ENCODE measurements at regions of chr10 and their contacts with region 1.

Region 1: GRCh38 chr10:27155066-27155754 is at the start of gene MASTL:
- DNase-seq: peak; percentile 69
- ATAC-seq: peak; percentile 86
- H3K4me3 ChIP-seq: peak within 1 kb of the TSS; percentile 87
- H3K27ac ChIP-seq: peak within 1 kb of the TSS; percentile 100
- H3K4me1 ChIP-seq: no peaks in the 10 kb centered on the region; the same call in 1 of the 2 replicates
- H3K27me3 ChIP-seq: no peaks in the 10 kb centered on the region
- CTCF ChIP-seq: no peak
- EP300 ChIP-seq: no peak
- POLR2A ChIP-seq: peak; percentile 96
- RAD21 ChIP-seq: no peak
- polyA plus RNA-seq, gene MASTL: 7.1 to 9.7 TPM

Region 2: GRCh38 chr10:26890956-26891355 is 264.3 kb before region 1 on chr10:
- CTCF ChIA-PET with region 1: no interaction called
- POLR2A ChIA-PET with region 1: no interaction called
- RAD21 ChIA-PET with region 1: no interaction called
- SMC1A ChIA-PET with region 1: no interaction called
- in situ Hi-C with region 1: no loop called
- intact Hi-C with region 1: loop called (anchors 5 kb)
- DNase-seq: no peak
- ATAC-seq: peak; percentile 83
- H3K4me3 ChIP-seq: no peak overlapping the region
- H3K27ac ChIP-seq: no peak overlapping the region
- H3K4me1 ChIP-seq: no peaks in the 10 kb centered on the region
- H3K27me3 ChIP-seq: no peaks in the 10 kb centered on the region; a peak in 1 of 4 replicates
- CTCF ChIP-seq: peak; percentile 55 to 71 (median 68)
- EP300 ChIP-seq: no peak
- POLR2A ChIP-seq: no peak
- RAD21 ChIP-seq: peak; percentile 87

Region 3: GRCh38 chr10:27019827-27020226 is 135.4 kb before region 1 on chr10:
- CTCF ChIA-PET with region 1: no interaction called
- POLR2A ChIA-PET with region 1: no interaction called
- RAD21 ChIA-PET with region 1: no interaction called
- SMC1A ChIA-PET with region 1: no interaction called
- in situ Hi-C with region 1: no loop called
- intact Hi-C with region 1: no loop called
- DNase-seq: no peak
- ATAC-seq: no peak
- H3K4me3 ChIP-seq: no peak overlapping the region
- H3K27ac ChIP-seq: no peak overlapping the region
- H3K4me1 ChIP-seq: no peaks in the 10 kb centered on the region
- H3K27me3 ChIP-seq: no peaks in the 10 kb centered on the region
- CTCF ChIP-seq: no peak
- EP300 ChIP-seq: no peak
- POLR2A ChIP-seq: no peak
- RAD21 ChIP-seq: no peak

Region 4: GRCh38 chr10:27099916-27100812 is 55.0 kb before region 1 on chr10 and contains the start of gene ANKRD26:
- CTCF ChIA-PET with region 1: no interaction called
- POLR2A ChIA-PET with region 1: interaction called, 7 read pairs
- RAD21 ChIA-PET with region 1: interaction called, 6 read pairs
- SMC1A ChIA-PET with region 1: interaction called, 4 read pairs
- in situ Hi-C with region 1: no loop called
- intact Hi-C with region 1: loop called (anchors 2 kb)
- DNase-seq: peak; percentile 94
- ATAC-seq: peak; percentile 89
- H3K4me3 ChIP-seq: peak within 1 kb of the TSS; percentile 73
- H3K27ac ChIP-seq: peak within 1 kb of the TSS; percentile 93
- H3K4me1 ChIP-seq: peaks cover 9% of the 10 kb centered on the region
- H3K27me3 ChIP-seq: no peaks in the 10 kb centered on the region
- CTCF ChIP-seq: 0 out of 6 replicates have a peak, but pooled peaks of 1 of the 3 experiments have one; percentile 1
- EP300 ChIP-seq: no peak
- POLR2A ChIP-seq: peak; percentile 85
- RAD21 ChIP-seq: no peak
- polyA plus RNA-seq, gene ANKRD26: 2.3 to 3.4 TPM

Region 5: GRCh38 chr10:27241652-27242472 is 86.7 kb after region 1 on chr10:
- CTCF ChIA-PET with region 1: interaction called, 13 read pairs
- POLR2A ChIA-PET with region 1: interaction called, 25 read pairs
- RAD21 ChIA-PET with region 1: interaction called, 6 read pairs
- SMC1A ChIA-PET with region 1: interaction called, 4 read pairs
- in situ Hi-C with region 1: no loop called
- intact Hi-C with region 1: loop called (anchors 1 kb)
- DNase-seq: peak; percentile 80
- ATAC-seq: peak; percentile 74
- H3K4me3 ChIP-seq: peak overlapping the region; percentile 93
- H3K27ac ChIP-seq: peak overlapping the region; percentile 95
- H3K4me1 ChIP-seq: peaks cover 4% of the 10 kb centered on the region; the same call in 1 of the 2 replicates
- H3K27me3 ChIP-seq: no peaks in the 10 kb centered on the region
- CTCF ChIP-seq: peak; percentile 17 to 40 (median 23); a peak in 5 of 6 replicates
- EP300 ChIP-seq: no peak
- POLR2A ChIP-seq: peak; percentile 90
- RAD21 ChIP-seq: no peak

Region 6: DNA sequence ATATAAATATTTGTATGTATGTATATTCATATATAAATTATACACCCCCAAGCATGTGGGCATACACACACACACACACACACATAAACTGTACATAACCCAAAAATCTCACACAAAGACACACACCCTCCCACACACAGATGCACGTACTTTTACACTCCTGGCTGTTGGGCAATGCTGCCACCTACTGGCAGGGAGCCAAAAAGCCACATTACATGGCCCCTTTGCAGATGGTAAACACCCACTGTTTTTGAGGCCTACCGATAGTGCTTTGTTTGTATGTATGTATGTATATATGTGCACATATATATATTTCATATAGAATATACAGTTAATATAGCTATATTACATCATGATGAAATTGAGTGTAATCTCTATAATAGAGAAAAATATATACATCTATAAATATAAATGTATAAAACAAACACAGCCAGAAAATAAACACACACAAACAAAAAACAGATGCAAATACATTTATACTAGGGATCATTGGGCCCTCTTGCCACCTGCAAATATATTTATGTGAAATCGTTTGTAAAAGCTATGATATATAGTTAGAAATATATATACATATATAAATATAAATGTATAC is 205.5 kb after region 1 on chr10:
- CTCF ChIA-PET with region 1: interaction called, 4 read pairs
- POLR2A ChIA-PET with region 1: no interaction called
- RAD21 ChIA-PET with region 1: interaction called, 3 read pairs
- SMC1A ChIA-PET with region 1: no interaction called
- in situ Hi-C with region 1: no loop called
- intact Hi-C with region 1: loop called (anchors 2 kb)
- DNase-seq: peak; percentile 62
- ATAC-seq: peak; percentile 98
- H3K4me3 ChIP-seq: no peak overlapping the region
- H3K27ac ChIP-seq: no peak overlapping the region
- H3K4me1 ChIP-seq: 0 out of 2 replicates have a peak, but pooled peaks cover 5% of the 10 kb centered on the region
- H3K27me3 ChIP-seq: no peaks in the 10 kb centered on the region
- CTCF ChIP-seq: peak; percentile 90 to 98 (median 95); a peak in 5 of 6 replicates
- EP300 ChIP-seq: no peak
- POLR2A ChIP-seq: no peak
- RAD21 ChIP-seq: peak; percentile 100

Region 7: DNA sequence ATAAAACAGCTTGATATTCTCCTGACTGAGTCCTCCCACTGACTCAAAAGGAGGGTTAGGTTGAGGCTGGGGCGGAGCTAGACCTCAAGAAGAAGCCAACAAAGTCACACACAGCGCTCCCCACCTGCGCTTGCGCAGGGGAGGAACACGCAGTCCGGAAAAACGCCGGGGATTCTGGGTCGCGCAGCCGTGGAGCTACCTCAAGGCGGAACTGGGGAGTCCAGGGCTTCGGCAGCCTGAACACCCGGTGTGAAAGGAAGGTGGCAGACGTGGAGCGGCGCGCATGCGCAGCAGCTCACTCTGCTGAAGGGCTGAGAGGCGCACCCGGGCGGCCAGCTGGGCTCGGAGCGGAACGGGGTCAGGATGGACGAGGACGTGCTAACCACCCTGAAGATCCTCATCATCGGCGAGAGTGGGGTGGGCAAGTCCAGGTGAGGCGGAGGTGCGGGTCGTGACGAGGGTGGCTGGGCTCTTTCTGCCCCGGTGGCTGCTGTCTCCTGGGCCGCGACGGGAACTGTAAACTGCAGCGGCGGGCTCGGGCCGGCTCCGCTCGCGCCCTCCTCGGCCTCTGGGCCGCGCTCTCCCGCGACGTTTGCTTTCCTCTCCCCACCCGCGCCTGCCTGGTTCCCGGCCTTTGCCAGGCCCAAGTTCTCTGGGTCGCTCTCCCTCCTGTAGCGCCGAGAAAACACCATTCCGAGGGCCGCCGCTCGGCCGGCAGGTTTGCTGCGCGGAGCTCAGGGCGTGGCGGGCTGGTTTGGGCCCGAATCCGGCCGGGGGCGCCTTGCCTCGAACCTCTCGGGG is 349.0 kb after region 1 on chr10 and contains the start of gene RAB18:
- CTCF ChIA-PET with region 1: no interaction called
- POLR2A ChIA-PET with region 1: interaction called, 3 read pairs
- RAD21 ChIA-PET with region 1: no interaction called
- SMC1A ChIA-PET with region 1: no interaction called
- in situ Hi-C with region 1: no loop called
- intact Hi-C with region 1: loop called (anchors 5 kb)
- DNase-seq: peak; percentile 96
- ATAC-seq: peak; percentile 97
- H3K4me3 ChIP-seq: peak within 1 kb of the TSS; percentile 83
- H3K27ac ChIP-seq: peak within 1 kb of the TSS; percentile 74
- H3K4me1 ChIP-seq: peaks cover 3% of the 10 kb centered on the region; the same call in 1 of the 2 replicates
- H3K27me3 ChIP-seq: no peaks in the 10 kb centered on the region
- CTCF ChIP-seq: peak in 1 of 3 experiments; percentile 8; a peak in 1 of 6 replicates
- EP300 ChIP-seq: no peak
- POLR2A ChIP-seq: peak; percentile 99
- RAD21 ChIP-seq: no peak
- polyA plus RNA-seq, gene RAB18: 45.5 to 67.0 TPM

Region 8: GRCh38 chr10:27584302-27584701 is 429.1 kb after region 1 on chr10:
- CTCF ChIA-PET with region 1: no interaction called
- POLR2A ChIA-PET with region 1: no interaction called
- RAD21 ChIA-PET with region 1: no interaction called
- SMC1A ChIA-PET with region 1: no interaction called
- in situ Hi-C with region 1: no loop called
- intact Hi-C with region 1: no loop called
- DNase-seq: no peak
- ATAC-seq: no peak
- H3K4me3 ChIP-seq: no peak overlapping the region
- H3K27ac ChIP-seq: no peak overlapping the region
- H3K4me1 ChIP-seq: no peaks in the 10 kb centered on the region
- H3K27me3 ChIP-seq: no peaks in the 10 kb centered on the region
- CTCF ChIP-seq: no peak
- EP300 ChIP-seq: no peak
- POLR2A ChIP-seq: no peak
- RAD21 ChIP-seq: no peak

Region 9: DNA sequence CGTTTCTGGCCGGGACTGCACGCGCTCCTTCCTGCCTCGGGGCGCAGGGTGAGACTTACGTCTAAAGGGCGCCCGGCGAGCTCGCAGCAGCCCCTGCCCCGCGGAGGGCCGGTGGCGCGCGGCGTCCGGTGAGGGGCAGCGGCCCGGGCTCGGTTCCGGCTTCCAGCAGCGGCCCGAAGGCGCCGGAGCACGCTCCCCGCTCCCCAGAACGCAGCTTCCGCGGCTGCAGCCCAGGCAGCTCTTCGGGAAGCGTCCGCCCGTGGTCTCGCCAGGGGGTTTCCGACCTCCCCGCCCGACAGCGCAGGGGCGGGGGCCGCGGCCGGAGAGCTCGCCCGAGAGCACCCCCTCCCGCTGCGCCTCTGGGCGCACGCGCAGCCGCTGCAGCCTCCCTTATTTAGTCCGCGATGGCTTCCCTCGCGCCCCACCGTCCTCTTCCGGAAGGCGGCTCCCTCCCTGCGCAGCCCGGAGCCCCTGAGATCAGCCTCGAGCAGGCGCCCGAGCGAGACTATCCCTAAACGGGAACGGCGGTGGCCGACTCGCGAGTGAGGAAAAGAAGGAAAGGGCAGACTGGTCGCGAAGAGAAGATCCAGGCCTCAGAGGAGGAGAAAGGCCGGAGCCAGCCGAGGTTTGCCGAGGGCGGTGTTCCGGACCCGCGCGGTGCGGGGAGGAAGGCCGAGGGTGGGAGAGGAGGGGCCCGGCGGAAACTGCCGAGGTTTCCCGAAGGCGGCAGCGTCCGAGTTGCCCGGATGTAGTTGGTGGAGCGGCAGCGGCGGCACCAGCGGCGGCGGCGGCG is 1377.4 kb after region 1 on chr10 and contains the start of gene WAC:
- CTCF ChIA-PET with region 1: no interaction called
- POLR2A ChIA-PET with region 1: no interaction called
- RAD21 ChIA-PET with region 1: no interaction called
- SMC1A ChIA-PET with region 1: no interaction called
- in situ Hi-C with region 1: no loop called
- intact Hi-C with region 1: loop called (anchors 10 kb)
- DNase-seq: peak; percentile 72
- ATAC-seq: peak; percentile 88
- H3K4me3 ChIP-seq: peak within 1 kb of the TSS; percentile 92
- H3K27ac ChIP-seq: peak within 1 kb of the TSS; percentile 100
- H3K4me1 ChIP-seq: peaks cover 4% of the 10 kb centered on the region
- H3K27me3 ChIP-seq: no peaks in the 10 kb centered on the region
- CTCF ChIP-seq: no peak
- EP300 ChIP-seq: 0 out of 4 replicates have a peak, but pooled peaks of 1 of the 2 experiments have one; percentile 16
- POLR2A ChIP-seq: peak; percentile 98
- RAD21 ChIP-seq: no peak
- polyA plus RNA-seq, gene WAC: 26.5 to 30.4 TPM